Activated CD8-positive, alpha-beta T cell treated with anti-CD3 and anti-CD28 coated beads for 36 hours (primary cell): ENCODE measurements at regions of chr1 and their contacts with region 1.

Region 1: DNA sequence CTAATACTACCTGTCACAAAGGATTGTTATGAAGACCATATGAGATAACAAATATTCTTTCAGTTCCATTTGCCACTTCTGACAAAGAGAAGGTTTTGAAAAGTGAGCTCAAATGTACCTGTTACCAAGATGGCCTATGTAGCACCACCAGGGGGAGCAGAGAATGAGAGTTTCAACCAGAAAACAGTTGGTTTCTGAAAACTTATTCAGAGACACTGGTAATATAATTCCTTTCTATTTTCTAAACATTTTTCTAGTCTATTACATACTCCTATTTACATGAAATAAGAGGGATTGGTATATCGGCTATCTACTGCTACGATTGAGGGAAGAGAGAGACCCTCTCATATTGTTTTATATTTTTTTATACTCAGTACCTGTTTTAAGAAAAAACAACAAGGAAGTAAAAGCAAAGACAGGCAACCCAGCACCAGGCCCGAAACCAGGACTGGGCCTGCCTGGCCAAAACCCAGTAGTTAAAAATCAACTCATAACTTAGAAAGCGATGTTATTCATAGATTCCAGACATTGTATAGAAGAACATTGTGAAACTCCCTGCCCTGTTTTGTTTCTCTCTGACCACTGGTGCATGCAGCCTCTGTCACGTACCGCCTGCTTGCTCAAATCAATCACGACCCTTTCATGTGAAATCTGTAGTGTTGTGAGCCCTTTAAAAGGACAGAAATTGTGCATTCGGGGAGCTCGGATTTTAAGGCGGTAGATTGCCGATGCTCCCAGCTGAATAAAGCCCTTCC is 48.3 kb downstream of the IL23R start:
- DNase-seq: peak; percentile 79
- ATAC-seq: peak; percentile 26
- H3K4me3 Mint-ChIP-seq: no peak overlapping the region
- H3K27ac Mint-ChIP-seq: no peak overlapping the region
- H3K4me1 Mint-ChIP-seq: peaks cover 39% of the 10 kb centered on the region
- H3K27me3 Mint-ChIP-seq: no peaks in the 10 kb centered on the region
- CTCF ChIP-seq: peak; percentile 58

Region 2: DNA sequence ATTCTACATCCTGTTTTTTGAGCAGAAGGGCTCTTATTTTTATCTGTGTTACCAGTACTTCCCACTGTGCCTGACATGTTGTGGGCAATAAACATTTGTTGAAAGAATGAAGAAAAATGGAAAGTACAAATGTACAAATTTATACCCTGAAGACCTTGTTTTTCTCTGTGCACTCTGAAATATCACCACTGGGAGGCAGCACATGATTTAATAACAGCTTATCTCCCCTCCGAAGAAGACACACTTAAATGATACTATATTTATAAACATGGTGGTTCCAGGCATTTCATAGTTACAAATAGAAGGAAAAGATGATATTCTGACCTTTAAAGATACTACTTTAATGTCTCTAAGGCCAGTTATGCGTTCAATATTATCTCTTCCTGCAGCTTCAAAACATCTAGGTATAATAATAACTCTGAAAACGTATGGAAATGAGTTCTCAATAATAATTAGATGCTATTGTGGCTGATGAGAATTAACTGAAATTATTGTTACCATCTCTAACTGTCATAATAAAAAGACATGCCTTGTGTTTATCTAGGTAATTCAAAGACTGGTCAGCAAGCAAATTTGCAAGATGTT is 449.5 kb before region 1 on chr1:
- CTCF ChIA-PET with region 1: interaction called, 10 read pairs
- POLR2A ChIA-PET with region 1: no interaction called
- intact Hi-C with region 1: no loop called
- DNase-seq: peak; percentile 78
- ATAC-seq: peak; percentile 76
- H3K4me3 Mint-ChIP-seq: no peak overlapping the region
- H3K27ac Mint-ChIP-seq: no peak overlapping the region
- H3K4me1 Mint-ChIP-seq: peaks cover 16% of the 10 kb centered on the region
- H3K27me3 Mint-ChIP-seq: no peaks in the 10 kb centered on the region
- CTCF ChIP-seq: peak; percentile 86

Region 3: GRCh38 chr1:67118191-67118590 is 96.4 kb before region 1 on chr1:
- CTCF ChIA-PET with region 1: no interaction called
- POLR2A ChIA-PET with region 1: no interaction called
- intact Hi-C with region 1: no loop called
- DNase-seq: no peak
- ATAC-seq: no peak
- H3K4me3 Mint-ChIP-seq: no peak overlapping the region
- H3K27ac Mint-ChIP-seq: no peak overlapping the region
- H3K4me1 Mint-ChIP-seq: peaks cover 7% of the 10 kb centered on the region
- H3K27me3 Mint-ChIP-seq: no peaks in the 10 kb centered on the region
- CTCF ChIP-seq: no peak

Region 4: DNA sequence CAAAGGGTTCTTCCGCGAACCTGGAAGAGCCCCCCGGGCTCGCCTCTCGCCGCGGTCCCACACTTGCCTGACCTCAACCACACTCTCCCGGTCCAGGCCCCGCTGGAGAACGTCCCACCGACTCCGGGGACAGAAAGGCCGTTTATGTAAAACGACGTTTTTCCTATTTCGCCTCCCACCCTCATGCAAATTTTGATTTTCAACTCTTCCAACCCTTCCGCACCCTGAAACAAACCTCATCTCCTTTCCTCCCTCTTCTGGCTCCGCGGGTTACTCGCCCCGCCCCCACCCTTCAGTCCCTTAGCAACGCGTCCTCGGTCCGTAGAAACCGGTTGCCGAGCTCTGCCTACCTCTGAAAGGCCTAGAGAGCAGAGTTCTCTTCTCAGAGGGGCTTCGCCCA is 79.9 kb before region 1 on chr1 and contains the start of gene C1orf141:
- CTCF ChIA-PET with region 1: interaction called, 20 read pairs
- POLR2A ChIA-PET with region 1: no interaction called
- intact Hi-C with region 1: no loop called
- DNase-seq: peak; percentile 43
- ATAC-seq: peak; percentile 75
- H3K4me3 Mint-ChIP-seq: peak within 1 kb of the TSS; percentile 70
- H3K27ac Mint-ChIP-seq: no peak within 1 kb of the TSS
- H3K4me1 Mint-ChIP-seq: peaks cover 8% of the 10 kb centered on the region
- H3K27me3 Mint-ChIP-seq: peaks cover 4% of the 10 kb centered on the region
- CTCF ChIP-seq: no peak
- total RNA-seq, gene C1orf141: not detected

Region 5: DNA sequence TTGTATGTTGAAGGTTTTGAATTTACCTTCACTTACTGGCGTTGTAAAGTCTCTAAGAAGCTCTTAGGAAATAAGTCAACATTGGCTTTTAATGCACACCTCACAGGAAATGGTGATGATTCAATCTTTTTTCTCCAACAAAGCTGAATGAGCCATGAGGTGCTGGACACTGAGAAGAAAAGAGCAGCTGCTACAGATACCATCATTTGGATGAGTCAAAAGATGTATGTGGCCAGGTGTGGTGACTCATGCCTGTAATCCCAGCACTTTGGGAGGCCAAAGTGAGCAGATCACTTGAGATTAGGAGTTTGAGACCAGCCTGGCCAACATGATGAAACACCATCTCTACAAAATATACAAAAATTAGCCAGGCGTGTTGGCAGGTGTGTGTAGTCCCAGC is 51.6 kb before region 1 on chr1:
- CTCF ChIA-PET with region 1: interaction called, 70 read pairs
- POLR2A ChIA-PET with region 1: interaction called, 4 read pairs
- intact Hi-C with region 1: no loop called
- DNase-seq: peak; percentile 79
- ATAC-seq: peak; percentile 76
- H3K4me3 Mint-ChIP-seq: no peak overlapping the region
- H3K27ac Mint-ChIP-seq: peak overlapping the region; percentile 83
- H3K4me1 Mint-ChIP-seq: peaks cover 39% of the 10 kb centered on the region
- H3K27me3 Mint-ChIP-seq: peaks cover 4% of the 10 kb centered on the region
- CTCF ChIP-seq: no peak

Region 6: DNA sequence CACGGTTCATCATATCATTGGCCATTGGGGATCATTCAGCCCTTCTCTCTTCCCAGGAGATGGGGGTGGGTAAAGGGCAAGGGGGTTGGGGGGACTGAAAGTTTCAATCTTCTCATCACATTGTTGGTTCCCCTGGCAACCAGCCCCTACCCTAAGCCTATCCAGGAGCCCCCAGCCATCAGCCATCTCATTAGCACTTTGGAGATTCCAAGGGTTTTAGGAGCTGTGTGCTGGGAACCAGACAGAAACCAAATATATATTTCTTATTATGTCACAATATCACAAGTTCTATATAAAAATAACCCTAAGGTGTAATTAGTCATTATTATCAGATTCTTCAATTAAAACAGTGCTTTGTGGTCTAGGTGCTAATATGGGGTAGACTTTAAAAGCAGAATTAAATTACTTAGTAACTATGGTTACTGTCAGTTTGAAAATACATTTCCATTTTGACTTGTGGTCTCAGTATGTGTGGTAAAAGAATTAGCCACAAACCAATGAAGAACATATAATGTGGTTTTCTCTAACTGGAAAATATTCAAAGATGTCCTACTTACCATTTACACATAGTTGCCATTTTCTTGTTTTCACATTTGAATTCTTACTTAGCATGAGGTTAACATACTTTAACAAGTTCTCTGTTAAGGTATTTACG is 20.3 kb before region 1 on chr1:
- CTCF ChIA-PET with region 1: interaction called, 52 read pairs
- POLR2A ChIA-PET with region 1: no interaction called
- intact Hi-C with region 1: no loop called
- DNase-seq: peak; percentile 23
- ATAC-seq: peak; percentile 35
- H3K4me3 Mint-ChIP-seq: no peak overlapping the region
- H3K27ac Mint-ChIP-seq: peak overlapping the region; percentile 53
- H3K4me1 Mint-ChIP-seq: peaks cover 16% of the 10 kb centered on the region
- H3K27me3 Mint-ChIP-seq: no peaks in the 10 kb centered on the region
- CTCF ChIP-seq: no peak

Region 7: DNA sequence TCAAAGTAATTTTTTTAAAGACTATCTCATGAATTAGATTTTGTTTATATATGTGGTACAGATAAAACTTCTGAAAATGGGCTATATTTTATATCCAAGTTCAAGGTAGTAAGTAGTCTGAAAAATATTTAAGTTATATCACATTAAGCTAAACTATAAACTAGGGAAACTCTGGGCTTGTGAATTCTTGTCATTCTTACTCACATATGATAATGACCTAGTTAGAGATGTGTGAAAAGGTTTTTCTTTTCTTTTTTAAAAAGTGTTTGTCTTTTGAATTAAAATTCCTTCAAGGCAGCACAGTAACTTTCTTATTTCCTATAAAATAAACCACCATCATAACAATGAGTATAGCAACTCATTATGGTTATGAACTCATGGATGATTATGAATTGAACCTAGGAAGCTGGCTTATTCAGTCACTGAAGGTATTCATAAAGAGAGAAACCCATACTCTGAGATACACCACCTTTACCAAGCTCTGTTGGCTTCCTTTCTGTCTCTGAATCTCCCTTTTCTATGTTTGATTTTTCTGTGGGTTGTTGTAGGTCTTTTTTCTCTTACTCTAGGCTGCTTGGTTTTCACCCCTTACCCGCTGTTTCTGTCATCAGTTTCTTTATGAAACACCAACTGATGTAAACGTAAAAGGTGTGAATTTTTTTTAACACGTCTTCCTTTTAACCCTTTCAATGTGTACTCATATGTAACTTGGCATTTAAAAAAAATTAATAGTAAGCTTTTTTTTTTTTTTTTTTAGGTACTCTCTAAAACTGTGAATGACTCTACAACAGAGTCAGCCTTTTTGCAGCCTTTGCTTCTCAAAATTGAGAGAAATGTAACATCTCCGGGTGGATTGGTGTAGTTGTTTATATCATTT is 118.3 kb after region 1 on chr1:
- CTCF ChIA-PET with region 1: interaction called, 14 read pairs
- POLR2A ChIA-PET with region 1: interaction called, 3 read pairs
- intact Hi-C with region 1: no loop called
- DNase-seq: peak; percentile 64
- ATAC-seq: peak; percentile 86
- H3K4me3 Mint-ChIP-seq: peak overlapping the region; percentile 28
- H3K27ac Mint-ChIP-seq: peak overlapping the region; percentile 95
- H3K4me1 Mint-ChIP-seq: peaks cover 72% of the 10 kb centered on the region
- H3K27me3 Mint-ChIP-seq: no peaks in the 10 kb centered on the region
- CTCF ChIP-seq: no peak

Region 8: GRCh38 chr1:67500413-67500959 is 285.9 kb after region 1 on chr1:
- CTCF ChIA-PET with region 1: interaction called, 120 read pairs
- POLR2A ChIA-PET with region 1: interaction called, 4 read pairs
- intact Hi-C with region 1: loop called (anchors 5 kb)
- DNase-seq: peak; percentile 95
- ATAC-seq: peak; percentile 100
- H3K4me3 Mint-ChIP-seq: no peak overlapping the region
- H3K27ac Mint-ChIP-seq: peak overlapping the region; percentile 21
- H3K4me1 Mint-ChIP-seq: peaks cover 7% of the 10 kb centered on the region
- H3K27me3 Mint-ChIP-seq: peaks cover 7% of the 10 kb centered on the region
- CTCF ChIP-seq: peak; percentile 92